ENCODE measurements at regions of chr1 and their contacts with region 1.

Region 1: GRCh38 chr1:16055613-16056520 is 12.3 kb downstream of the CLCNKB start:
- DNase-seq: peak; percentile 96
- H3K4me3 ChIP-seq: no peak overlapping the region
- H3K27ac ChIP-seq: no peak overlapping the region
- H3K4me1 ChIP-seq: peaks cover 0 to 6% of the 10 kb centered on the region in 2 donors
- H3K27me3 ChIP-seq: no peaks in the 10 kb centered on the region
- CTCF ChIP-seq: peak; percentile 86 to 99 (median 98)
- POLR2A ChIP-seq: no peak

Region 2: GRCh38 chr1:15799004-15799936 is 256.6 kb before region 1 on chr1:
- intact Hi-C with region 1: loop called (anchors 10 kb)
- DNase-seq: peak; percentile 84 to 85
- H3K4me3 ChIP-seq: no peak overlapping the region
- H3K27ac ChIP-seq: peak overlapping the region; percentile 32 to 90 (median 73)
- H3K4me1 ChIP-seq: peaks cover 25 to 52% of the 10 kb centered on the region in 2 donors
- H3K27me3 ChIP-seq: no peaks in the 10 kb centered on the region
- CTCF ChIP-seq: no peak
- POLR2A ChIP-seq: no peak

Region 3: GRCh38 chr1:16009030-16009709 is 46.7 kb before region 1 on chr1:
- intact Hi-C with region 1: loop called (anchors 5 kb)
- DNase-seq: peak; percentile 86 to 88
- H3K4me3 ChIP-seq: no peak overlapping the region
- H3K27ac ChIP-seq: no peak overlapping the region
- H3K4me1 ChIP-seq: peaks cover 13 to 21% of the 10 kb centered on the region in 2 donors
- H3K27me3 ChIP-seq: no peaks in the 10 kb centered on the region
- CTCF ChIP-seq: peak; percentile 93 to 97 (median 96)
- POLR2A ChIP-seq: no peak

Measured in thyroid gland (tissue), 4 donors.